A549 (cell line): ENCODE measurements at regions of chr12 and their contacts with region 1.

Region 1: DNA sequence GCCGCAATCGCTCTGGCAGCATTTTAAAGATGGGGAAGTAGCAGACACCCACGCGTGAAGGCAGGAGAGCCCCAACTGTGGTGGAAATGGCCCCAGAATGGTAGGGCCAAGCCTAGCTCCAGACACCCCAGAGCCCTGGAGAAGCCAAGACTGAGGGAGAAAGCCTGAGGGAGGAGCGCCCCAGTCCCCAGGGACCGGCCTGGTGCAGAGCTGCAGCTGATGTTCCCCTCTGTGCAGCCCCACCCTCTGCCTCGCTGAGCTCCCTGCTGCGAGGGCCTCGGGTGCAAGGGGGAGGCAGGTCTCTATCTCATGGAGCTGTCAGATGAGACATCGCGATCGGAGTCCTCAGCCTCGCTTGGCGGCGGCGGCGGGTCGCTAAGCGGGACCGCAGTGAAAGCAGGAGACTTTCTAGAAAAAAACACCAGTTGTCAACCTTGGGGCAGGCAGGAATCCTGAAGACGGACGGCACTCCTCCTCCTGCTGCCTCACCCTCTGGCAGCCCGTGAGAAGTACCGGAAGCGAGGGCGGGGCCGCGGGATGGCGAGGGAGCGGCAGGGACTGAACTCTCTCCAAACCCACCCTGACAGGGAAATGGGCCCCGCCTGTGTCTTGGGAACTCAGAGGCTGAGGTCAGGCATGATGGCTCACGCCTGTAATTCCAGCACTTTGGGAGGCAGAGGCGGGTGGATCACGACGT is 6.0 kb downstream of the GAPDH start:
- DNase-seq: peak; percentile 87 to 91
- ATAC-seq: peak; percentile 58 to 69
- H3K4me3 ChIP-seq: peak overlapping the region; percentile 34
- H3K27ac ChIP-seq: peak overlapping the region; percentile 70 to 81
- H3K4me1 ChIP-seq: peaks cover 57% of the 10 kb centered on the region
- CTCF ChIP-seq: no peak
- EP300 ChIP-seq: no peak
- POLR2A ChIP-seq: no peak
- RAD21 ChIP-seq: no peak

Region 2: GRCh38 chr12:6312529-6313325 is 227.6 kb before region 1 on chr12:
- CTCF ChIA-PET with region 1: no interaction called
- POLR2A ChIA-PET with region 1: no interaction called
- DNase-seq: no peak
- ATAC-seq: peak; percentile 7 to 28
- H3K4me3 ChIP-seq: no peak overlapping the region
- H3K27ac ChIP-seq: peak overlapping the region; percentile 28 to 68; a peak in 4 of 6 replicates
- H3K4me1 ChIP-seq: peaks cover 33% of the 10 kb centered on the region
- CTCF ChIP-seq: no peak
- EP300 ChIP-seq: no peak
- POLR2A ChIP-seq: no peak
- RAD21 ChIP-seq: no peak

Region 3: GRCh38 chr12:6383572-6384498 is 156.5 kb before region 1 on chr12 and contains the start of gene LTBR:
- CTCF ChIA-PET with region 1: no interaction called
- POLR2A ChIA-PET with region 1: no interaction called
- DNase-seq: peak; percentile 83 to 91
- ATAC-seq: peak; percentile 94 to 96
- H3K4me3 ChIP-seq: peak within 1 kb of the TSS; percentile 83
- H3K27ac ChIP-seq: peak within 1 kb of the TSS; percentile 99 to 100
- H3K4me1 ChIP-seq: peaks cover 42% of the 10 kb centered on the region
- CTCF ChIP-seq: no peak
- EP300 ChIP-seq: no peak
- POLR2A ChIP-seq: peak; percentile 66
- RAD21 ChIP-seq: peak in 1 of 2 experiments; percentile 55; a peak in 4 of 5 replicates
- polyA plus RNA-seq, gene LTBR: 57.3 and 63.9 TPM in 2 replicates

Region 4: GRCh38 chr12:6493497-6494257 is 46.7 kb before region 1 on chr12 and contains the start of gene NCAPD2:
- CTCF ChIA-PET with region 1: interaction called, 18 read pairs
- POLR2A ChIA-PET with region 1: interaction called, 39 read pairs
- DNase-seq: peak; percentile 90 to 98
- ATAC-seq: peak; percentile 94 to 95
- H3K4me3 ChIP-seq: peak within 1 kb of the TSS; percentile 80
- H3K27ac ChIP-seq: peak within 1 kb of the TSS; percentile 90 to 93
- H3K4me1 ChIP-seq: peaks cover 25% of the 10 kb centered on the region
- CTCF ChIP-seq: no peak
- EP300 ChIP-seq: no peak
- POLR2A ChIP-seq: peak; percentile 69
- RAD21 ChIP-seq: no peak
- polyA plus RNA-seq, gene NCAPD2: 130 and 145 TPM in 2 replicates

Region 5: DNA sequence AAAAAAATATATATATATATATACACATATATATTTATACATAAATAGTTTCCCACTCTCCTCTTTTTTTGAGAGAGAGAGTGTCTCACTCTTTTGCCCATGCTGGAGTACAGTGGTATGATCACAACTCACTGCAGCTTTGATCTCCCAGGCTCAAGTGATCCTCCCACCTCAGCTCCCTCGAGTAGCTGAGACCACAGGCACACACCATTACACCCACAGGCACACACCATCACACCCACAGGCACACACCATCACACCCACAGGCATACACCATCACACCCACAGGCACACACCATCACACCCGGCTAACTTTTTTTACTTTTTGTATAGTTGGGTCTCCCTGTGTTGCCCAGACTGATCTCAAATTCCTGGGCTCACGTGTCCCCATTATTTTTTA is 20.1 kb before region 1 on chr12:
- CTCF ChIA-PET with region 1: interaction called, 11 read pairs
- POLR2A ChIA-PET with region 1: no interaction called
- DNase-seq: no peak
- ATAC-seq: no peak
- H3K4me3 ChIP-seq: no peak overlapping the region
- H3K27ac ChIP-seq: no peak overlapping the region
- H3K4me1 ChIP-seq: no peaks in the 10 kb centered on the region
- CTCF ChIP-seq: no peak
- EP300 ChIP-seq: no peak
- POLR2A ChIP-seq: no peak
- RAD21 ChIP-seq: no peak

Region 6: DNA sequence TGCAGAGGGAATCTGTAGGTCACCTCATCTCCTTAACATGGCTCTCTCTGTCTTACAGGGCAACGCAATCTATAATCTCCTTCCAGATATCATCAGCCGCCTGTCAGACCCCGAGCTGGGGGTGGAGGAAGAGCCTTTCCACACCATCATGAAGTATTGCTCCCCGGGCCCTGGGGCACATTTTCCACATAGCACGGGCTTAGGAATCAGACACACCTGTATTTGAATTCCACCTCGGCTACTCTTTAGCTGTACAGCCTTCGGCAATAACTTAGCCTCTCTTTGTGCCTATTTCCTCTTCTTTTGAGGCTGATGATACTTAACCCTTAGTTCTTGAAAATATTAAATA is 11.5 kb before region 1 on chr12:
- CTCF ChIA-PET with region 1: interaction called, 491 read pairs
- POLR2A ChIA-PET with region 1: no interaction called
- DNase-seq: no peak
- ATAC-seq: no peak
- H3K4me3 ChIP-seq: no peak overlapping the region
- H3K27ac ChIP-seq: no peak overlapping the region
- H3K4me1 ChIP-seq: peaks cover 20% of the 10 kb centered on the region
- CTCF ChIP-seq: no peak
- EP300 ChIP-seq: no peak
- POLR2A ChIP-seq: no peak
- RAD21 ChIP-seq: no peak